Psoas muscle (tissue), 8 donors: ENCODE measurements at regions of chr15 and their contacts with region 1.

Region 1: DNA sequence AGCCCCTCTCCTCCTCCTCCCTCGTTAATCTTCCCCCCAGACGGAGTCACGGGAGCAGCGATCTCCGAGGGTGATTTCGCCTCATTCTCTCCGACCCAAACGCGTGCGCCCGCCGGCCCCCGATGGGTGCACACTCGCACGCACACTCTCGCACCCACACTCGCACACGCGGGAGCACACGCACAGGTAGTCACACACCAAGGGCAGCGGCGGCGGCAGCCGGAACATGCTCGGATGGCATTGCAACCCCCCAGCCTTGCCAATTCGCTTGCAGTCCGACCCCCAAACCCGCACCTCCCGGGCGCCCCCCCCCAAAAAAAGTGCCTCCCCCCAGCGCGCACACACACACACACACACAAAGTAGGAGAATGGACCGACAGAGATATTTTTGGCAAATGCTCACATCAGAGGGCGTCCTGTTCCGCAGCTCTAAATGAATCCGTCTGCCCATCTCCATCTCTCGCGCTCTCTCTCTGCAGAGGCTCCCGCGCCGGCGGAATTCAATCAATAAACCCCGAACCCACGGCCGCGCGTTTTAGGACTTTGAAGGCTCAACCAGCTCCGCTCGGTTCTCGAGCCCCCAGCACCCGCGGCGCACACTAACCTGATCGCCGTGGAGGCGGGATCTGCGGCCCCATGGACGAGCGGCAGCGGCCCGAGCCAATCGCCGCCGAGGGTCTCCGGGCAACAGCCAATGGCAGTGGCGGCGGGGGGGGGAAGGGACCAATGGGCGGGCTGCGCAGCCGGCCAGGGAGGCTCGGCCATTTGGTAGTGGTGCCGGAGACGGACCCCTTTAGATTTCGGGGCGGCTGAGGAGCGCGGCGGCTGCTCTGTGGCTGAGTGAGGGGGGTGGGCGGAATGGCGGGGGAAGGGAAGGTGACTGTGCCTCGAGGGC is at the start of gene ANP32A:
- DNase-seq: peak; percentile 98 to 99
- ATAC-seq: peak; percentile 77 to 84 (median 82)
- H3K4me3 ChIP-seq: peak within 1 kb of the TSS; percentile 86
- H3K27ac ChIP-seq: peak within 1 kb of the TSS; percentile 99
- H3K4me1 ChIP-seq: peaks cover 18% of the 10 kb centered on the region
- H3K27me3 ChIP-seq: no peaks in the 10 kb centered on the region
- CTCF ChIP-seq: no peak
- total RNA-seq, gene ANP32A: 56.7 to 89.2 (median 83.3) TPM

Region 2: GRCh38 chr15:68277603-68278344 is 542.8 kb before region 1 on chr15 and contains the start of gene FEM1B:
- intact Hi-C with region 1: loop called in 1 of 2 experiments (anchors 2 kb)
- DNase-seq: peak; percentile 93 to 96
- ATAC-seq: peak; percentile 77 to 91 (median 88)
- H3K4me3 ChIP-seq: peak within 1 kb of the TSS; percentile 85
- H3K27ac ChIP-seq: peak within 1 kb of the TSS; percentile 97
- H3K4me1 ChIP-seq: peaks cover 61% of the 10 kb centered on the region
- H3K27me3 ChIP-seq: no peaks in the 10 kb centered on the region
- CTCF ChIP-seq: peak; percentile 27
- total RNA-seq, gene FEM1B: 69.3 to 188 (median 111) TPM

Region 3: GRCh38 chr15:68730471-68730919 is 90.0 kb before region 1 on chr15:
- intact Hi-C with region 1: loop called in 1 of 2 experiments (anchors 2 kb)
- DNase-seq: peak in 1 of 2 donors; percentile 52
- ATAC-seq: peak; percentile 44 to 70 (median 52)
- H3K4me3 ChIP-seq: no peak overlapping the region
- H3K27ac ChIP-seq: peak overlapping the region; percentile 46
- H3K4me1 ChIP-seq: peaks cover 7% of the 10 kb centered on the region
- H3K27me3 ChIP-seq: no peaks in the 10 kb centered on the region
- CTCF ChIP-seq: peak; percentile 53

Region 4: DNA sequence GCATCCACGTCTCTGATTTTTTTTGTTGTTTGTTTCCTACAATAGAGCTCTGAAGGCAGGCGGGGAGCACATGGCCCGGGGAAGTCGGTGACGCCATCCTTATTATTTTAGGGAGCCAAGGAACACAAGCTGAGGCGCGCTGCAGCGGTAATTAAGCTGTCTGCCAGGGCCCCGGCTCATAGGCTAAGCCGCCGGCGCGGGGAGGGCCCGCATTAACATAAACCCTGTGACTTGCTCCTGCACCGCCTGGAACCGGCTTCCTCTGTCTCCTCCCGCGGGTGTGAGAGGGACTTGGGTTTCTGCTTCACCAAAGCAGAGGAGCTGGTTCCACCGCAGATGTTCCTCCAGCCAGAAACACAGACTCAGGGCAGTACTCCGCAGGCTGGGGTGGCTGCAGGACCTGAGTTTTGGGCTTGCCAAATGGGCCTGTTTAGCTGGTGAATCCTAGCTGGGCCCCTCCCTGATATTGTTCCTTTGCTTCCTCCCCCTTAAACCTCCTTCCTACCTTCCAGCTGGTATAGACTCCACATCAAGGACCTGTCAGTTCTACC is 25.2 kb before region 1 on chr15:
- intact Hi-C with region 1: loop called (anchors 2 kb)
- DNase-seq: peak; percentile 88 to 94
- ATAC-seq: peak; percentile 92 to 96 (median 94)
- H3K4me3 ChIP-seq: peak overlapping the region; percentile 26
- H3K27ac ChIP-seq: peak overlapping the region; percentile 83
- H3K4me1 ChIP-seq: peaks cover 82% of the 10 kb centered on the region
- H3K27me3 ChIP-seq: no peaks in the 10 kb centered on the region
- CTCF ChIP-seq: no peak

Region 5: GRCh38 chr15:69014454-69014853 is 193.9 kb after region 1 on chr15 and contains the start of gene NOX5:
- intact Hi-C with region 1: no loop called
- DNase-seq: no peak
- ATAC-seq: no peak
- H3K4me3 ChIP-seq: no peak within 1 kb of the TSS
- H3K27ac ChIP-seq: no peak within 1 kb of the TSS
- H3K4me1 ChIP-seq: no peaks in the 10 kb centered on the region
- H3K27me3 ChIP-seq: no peaks in the 10 kb centered on the region
- CTCF ChIP-seq: no peak
- total RNA-seq, gene NOX5: 0.06 to 0.13 TPM in 2 of 4 donors, not detected in the others

Region 6: GRCh38 chr15:69145694-69146492 is 325.4 kb after region 1 on chr15:
- intact Hi-C with region 1: no loop called
- DNase-seq: no peak
- ATAC-seq: no peak
- H3K4me3 ChIP-seq: no peak overlapping the region
- H3K27ac ChIP-seq: no peak overlapping the region
- H3K4me1 ChIP-seq: no peaks in the 10 kb centered on the region
- H3K27me3 ChIP-seq: peaks cover 0 to 27% (median 3%) of the 10 kb centered on the region in 3 donors
- CTCF ChIP-seq: no peak

Region 7: GRCh38 chr15:69172828-69173227 is 352.3 kb after region 1 on chr15:
- intact Hi-C with region 1: no loop called
- DNase-seq: no peak
- ATAC-seq: no peak
- H3K4me3 ChIP-seq: no peak overlapping the region
- H3K27ac ChIP-seq: no peak overlapping the region
- H3K4me1 ChIP-seq: no peaks in the 10 kb centered on the region
- H3K27me3 ChIP-seq: no peaks in the 10 kb centered on the region
- CTCF ChIP-seq: no peak